ENCODE measurements at regions of chr21 and their contacts with region 1.

Region 1: GRCh38 chr21:33348706-33349105 is 23.9 kb downstream of the IFNAR1 start:
- H3K4me3 Mint-ChIP-seq: no peak overlapping the region
- H3K27ac Mint-ChIP-seq: no peak overlapping the region
- H3K4me1 Mint-ChIP-seq: peaks cover 6% of the 10 kb centered on the region
- H3K27me3 Mint-ChIP-seq: no peaks in the 10 kb centered on the region

Region 2: DNA sequence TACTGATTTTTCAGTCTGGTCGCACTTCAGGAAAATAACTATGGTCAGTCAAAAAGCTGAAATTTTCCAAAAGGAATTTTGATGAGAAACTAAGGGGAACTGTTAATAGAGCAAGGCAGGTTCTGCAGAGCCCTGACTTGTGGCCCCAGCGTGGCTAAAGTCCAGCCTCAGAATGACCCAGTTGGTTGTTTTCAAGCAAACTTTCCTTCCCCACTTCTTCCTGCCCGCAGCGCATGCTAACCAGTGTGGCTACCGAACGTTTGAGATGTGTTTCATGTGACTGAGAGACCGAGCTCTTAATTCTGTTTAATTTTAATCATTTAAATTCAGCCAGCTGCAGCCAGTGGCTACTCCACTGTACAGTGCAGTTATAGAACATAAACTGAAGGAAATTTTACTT is 88.7 kb before region 1 on chr21:
- intact Hi-C with region 1: loop called (anchors 10 kb)
- H3K4me3 Mint-ChIP-seq: no peak overlapping the region
- H3K27ac Mint-ChIP-seq: no peak overlapping the region
- H3K4me1 Mint-ChIP-seq: peaks cover 50% of the 10 kb centered on the region
- H3K27me3 Mint-ChIP-seq: no peaks in the 10 kb centered on the region

Measured in dendritic cell treated with granulocyte-macrophage colony-stimulating factor and Interleukin-4, amounts not matched to agents 40 ng/mL and 50 ng/mL, for 4 days (primary cell).